Adrenal gland (tissue), 19 donors: ENCODE measurements at regions of chr5 and their contacts with region 1.

Region 1: DNA sequence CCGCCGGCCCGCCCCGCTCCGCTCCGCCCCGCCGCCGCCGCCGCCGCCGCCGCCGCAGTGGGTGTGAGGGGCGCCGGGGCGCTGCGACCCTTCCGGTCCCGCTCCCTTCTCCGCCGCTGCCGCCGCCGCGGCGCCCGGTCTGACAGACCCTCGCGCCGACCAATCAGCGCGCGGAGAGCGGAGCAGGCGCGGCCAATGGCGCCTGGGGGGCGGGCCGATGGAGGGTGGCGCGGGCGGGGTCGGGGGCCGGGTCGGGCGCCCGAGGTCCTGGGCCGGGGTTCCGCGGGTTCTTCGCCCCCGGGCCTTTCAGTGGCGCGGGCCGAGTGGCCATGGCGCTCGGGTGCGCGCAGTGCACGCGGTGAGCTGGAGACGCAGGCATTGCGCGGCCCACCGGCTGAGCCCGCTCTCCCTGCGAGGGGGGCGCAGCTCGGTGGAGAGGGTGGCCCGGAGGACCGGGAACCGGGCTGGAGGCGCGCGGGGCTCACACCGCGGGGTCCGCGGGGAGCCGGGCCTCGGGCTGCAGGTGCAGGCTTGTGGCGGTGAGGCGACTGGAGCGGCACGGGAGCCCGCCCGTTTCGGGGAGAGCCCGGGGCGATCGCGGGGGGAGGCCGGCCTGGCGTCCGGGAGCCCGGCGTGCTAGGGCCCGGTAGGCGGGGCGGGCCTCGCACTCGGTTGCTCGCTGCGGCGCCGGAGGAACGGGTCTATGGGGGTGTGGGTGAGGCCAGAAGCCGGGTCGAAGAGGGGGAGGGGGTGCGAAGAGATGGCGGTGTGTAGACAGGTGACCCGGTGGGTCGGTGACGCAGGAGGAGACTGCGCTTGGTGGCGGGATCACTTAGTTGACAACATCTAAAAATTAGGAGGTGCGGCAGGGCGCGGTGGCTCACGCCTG is at the start of gene MAPK9:
- DNase-seq: peak; percentile 75 to 89 (median 84)
- H3K4me3 ChIP-seq: peak within 1 kb of the TSS in 3 of 4 donors; percentile 65 to 93 (median 91)
- H3K27ac ChIP-seq: peak within 1 kb of the TSS; percentile 75 to 91 (median 89)
- H3K4me1 ChIP-seq: peaks cover 20 to 28% of the 10 kb centered on the region in 2 donors
- H3K27me3 ChIP-seq: no peaks in the 10 kb centered on the region
- CTCF ChIP-seq: no peak
- POLR2A ChIP-seq: peak; percentile 28 to 53
- total RNA-seq, gene MAPK9: 19.4 to 54.0 (median 36.5) TPM

Region 2: GRCh38 chr5:180605554-180606214 is 313.5 kb after region 1 on chr5:
- intact Hi-C with region 1: loop called in 1 of 2 experiments (anchors 10 kb)
- DNase-seq: peak; percentile 29 to 84 (median 67)
- H3K4me3 ChIP-seq: no peak overlapping the region
- H3K27ac ChIP-seq: no peak overlapping the region
- H3K4me1 ChIP-seq: no peaks in the 10 kb centered on the region
- H3K27me3 ChIP-seq: no peaks in the 10 kb centered on the region
- CTCF ChIP-seq: peak; percentile 52 to 69 (median 61)
- POLR2A ChIP-seq: no peak